ENCODE measurements at regions of chr17 and their contacts with region 1.

Region 1: GRCh38 chr17:57236686-57237287 is 19.5 kb upstream of the MSI2 start:
- DNase-seq: no peak

Region 2: DNA sequence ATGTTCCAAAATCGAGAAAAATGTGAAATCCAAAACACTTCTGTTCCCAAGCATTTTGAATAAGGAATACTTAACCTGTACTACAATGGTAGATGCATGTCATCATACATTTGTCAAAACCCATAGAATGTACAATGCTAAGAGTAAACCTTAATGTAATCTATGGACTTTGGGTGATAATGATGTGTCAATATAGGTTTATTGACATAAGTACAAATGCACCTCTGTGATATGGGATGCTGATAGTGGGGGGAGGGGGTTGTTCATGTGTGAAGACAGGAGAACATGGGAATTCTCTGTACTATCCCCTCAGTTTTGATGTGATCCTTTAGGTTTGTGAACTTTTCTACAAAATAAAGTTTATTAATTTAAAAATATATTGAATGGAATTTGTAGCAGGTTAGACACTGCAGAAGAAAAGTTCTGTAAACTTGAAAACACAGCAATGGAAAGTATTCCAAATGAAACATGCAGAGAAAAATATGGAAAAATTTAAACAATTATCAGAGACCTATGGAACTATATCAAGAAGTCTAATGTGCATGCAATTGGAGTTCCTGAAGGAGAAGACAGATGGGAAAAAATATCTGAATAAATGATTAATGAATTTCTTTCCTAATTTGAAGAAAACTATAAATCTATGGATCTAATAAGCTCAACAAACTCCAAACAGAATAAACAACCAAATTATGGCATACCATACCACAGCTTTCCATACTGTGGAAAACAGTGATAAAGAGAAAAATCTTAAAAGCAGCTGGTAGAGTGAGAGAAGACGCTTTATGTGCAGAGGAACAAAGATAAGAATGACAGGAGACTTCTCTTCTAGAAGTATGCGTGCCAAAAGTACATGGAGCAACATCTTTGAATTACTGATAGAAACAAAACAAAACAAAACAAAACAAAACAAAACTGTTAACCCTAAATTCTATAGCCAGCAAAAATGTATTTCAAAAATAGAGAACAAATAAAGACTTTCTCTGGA is 15.1 kb before region 1 on chr17:
- intact Hi-C with region 1: loop called in 1 of 2 experiments (anchors 1 kb)
- DNase-seq: no peak

Measured in posterior vena cava (tissue), 2 donors.